Posterior vena cava (tissue), 2 donors: ENCODE measurements at regions of chr1 and their contacts with region 1.

Region 1: DNA sequence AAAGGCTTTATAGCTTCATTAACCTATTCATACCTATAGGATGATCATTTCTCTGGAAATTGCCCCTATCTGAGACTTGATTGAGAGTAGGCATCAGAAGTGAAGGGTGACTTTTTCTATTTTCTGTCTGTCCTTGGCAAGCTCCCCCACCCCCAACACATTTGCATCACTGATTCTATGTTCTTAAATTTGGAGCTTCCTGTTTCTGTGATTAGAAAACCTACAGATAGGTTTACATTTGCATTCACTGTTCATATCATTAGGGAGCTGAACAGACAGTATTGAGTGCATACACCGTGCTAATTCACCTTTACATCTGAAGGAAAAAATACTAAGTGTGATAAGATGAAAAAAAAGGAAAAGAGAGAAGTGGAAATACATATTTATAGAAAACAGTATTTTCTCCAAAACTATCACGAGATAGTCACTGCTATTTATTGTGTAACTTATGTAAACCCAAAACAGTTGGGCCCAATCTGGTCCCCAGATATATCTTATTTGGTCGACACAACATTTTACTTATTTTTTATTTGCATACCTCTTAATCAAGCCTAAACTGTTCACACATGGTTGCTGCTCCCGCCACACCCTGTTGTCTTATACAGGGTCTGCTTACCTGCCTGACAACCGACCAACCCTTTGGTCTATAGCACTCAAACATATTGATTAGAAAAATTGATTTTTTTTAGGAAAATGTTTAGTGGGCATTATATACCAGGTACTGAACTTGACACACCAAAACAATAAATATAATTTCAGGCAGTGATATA is 218.8 kb downstream of the NTNG1 start:
- DNase-seq: no peak

Region 2: GRCh38 chr1:107394301-107394700 is 34.6 kb after region 1 on chr1:
- intact Hi-C with region 1: loop called in 1 of 2 experiments (anchors 2 kb)
- DNase-seq: no peak